GM18951 (cell line): ENCODE measurements at regions of chr12 and their contacts with region 1.

Region 1: DNA sequence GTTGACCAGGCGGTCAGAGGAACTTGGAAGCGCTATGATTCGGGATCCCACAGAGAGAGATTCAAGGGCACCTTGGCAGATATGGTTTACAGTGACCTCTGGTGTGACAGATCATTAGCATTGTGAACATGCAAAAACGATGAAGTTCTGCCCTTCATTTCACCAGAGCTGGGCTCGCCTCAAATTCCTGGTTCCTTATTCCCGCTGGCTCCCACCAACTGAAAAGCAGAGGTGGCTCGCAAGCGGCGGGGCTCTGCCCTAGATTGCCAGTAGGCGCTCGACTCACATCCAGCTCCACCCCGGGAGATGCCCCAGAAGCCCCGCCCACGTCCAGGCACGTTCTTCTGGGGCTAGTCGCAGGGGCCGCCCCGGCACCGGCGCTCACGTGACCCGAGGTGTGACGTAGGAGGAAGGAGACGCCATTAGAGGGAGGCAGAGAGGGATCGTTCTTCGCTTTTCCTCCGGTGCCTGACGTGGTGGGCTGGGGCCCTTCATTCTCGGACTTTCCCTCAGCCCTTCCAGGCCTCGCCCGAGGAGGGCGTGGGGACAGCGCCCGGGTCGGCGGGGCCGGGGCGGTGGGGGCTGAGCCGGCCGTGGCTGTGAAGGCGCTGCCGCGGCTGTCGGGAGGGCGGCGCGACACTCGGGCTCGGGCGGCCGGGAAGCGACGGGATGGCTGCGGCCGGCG is at the start of gene RAB21:
- POLR2A ChIP-seq: peak; percentile 80

Region 2: DNA sequence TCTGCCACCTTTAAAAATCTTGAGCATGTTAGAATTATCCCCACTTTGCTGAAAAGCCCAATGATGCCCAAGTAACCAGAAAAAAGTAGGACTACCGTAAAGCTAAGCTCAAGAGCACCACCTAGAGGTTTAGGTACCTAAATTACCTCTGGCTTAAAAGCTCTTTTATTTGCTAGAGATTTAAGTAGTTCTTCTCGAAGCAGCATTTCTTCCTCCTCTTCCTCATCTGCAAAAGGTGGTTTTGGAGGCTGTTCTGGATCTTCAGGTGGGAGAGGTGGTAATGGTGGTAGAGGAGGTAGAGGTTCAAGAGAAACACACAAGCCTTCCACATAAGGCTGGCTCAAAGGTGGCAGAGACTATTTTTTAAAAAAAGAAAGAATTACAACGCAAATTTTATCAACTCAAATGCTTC is 117.9 kb before region 1 on chr12:
- in situ Hi-C with region 1: loop called (anchors 5 kb)
- POLR2A ChIP-seq: no peak

Region 3: DNA sequence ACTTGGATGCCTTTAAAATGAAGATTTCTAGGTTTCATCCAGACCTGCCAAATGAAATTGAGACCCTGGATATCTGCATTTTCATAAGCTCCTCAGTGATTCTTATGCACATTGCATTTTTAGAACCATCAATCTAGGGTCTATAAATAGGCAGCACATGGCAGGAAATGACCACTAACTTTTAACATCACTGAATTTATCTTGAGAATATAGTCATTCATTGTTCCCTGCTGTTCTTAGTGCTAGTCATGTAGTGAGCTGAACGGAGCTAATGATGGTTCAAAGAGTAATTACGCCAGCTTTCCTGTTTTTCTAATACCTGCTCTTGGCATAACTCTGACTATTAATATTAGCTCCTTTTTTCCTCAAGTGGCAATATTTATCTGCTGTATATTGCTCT is 275.7 kb after region 1 on chr12:
- in situ Hi-C with region 1: no loop called
- POLR2A ChIP-seq: no peak